ENCODE measurements at regions of chr3 and their contacts with region 1.

Region 1: DNA sequence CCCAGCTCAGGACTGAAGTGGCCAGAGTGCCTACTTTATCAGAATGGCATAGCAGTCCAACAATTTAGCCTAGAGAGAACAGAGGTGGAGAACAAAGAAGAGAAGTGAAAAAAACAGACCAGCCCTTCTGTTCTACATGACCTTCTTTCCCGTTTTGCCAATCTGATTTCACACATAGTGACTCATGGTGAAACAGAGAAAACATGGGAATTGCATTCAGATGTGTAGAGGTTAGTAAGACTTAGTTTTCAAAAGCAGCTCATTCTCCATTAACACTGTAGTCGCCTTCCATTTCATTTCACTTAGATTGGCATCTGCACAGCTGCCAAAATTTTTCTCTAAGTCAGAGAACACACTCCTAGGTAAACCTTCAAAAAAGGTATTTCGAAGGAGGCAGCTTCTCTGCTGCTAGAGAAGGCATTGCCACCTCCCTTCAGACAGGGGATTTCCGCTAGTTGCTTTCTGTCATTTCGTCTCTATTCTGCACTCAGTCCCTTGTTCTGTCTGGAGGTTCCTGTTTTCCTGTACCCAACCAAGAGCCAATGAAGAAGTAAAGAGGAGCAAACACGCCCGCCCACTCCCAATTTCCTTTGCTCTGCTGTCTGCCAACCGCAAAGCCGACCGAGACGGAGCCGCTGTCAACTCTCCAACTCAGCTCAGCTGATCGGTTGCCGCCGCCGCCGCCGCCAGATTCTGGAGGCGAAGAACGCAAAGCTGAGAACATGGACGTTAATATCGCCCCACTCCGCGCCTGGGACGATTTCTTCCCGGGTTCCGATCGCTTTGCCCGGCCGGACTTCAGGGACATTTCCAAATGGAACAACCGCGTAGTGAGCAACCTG is at the start of gene ARL6IP5:
- H3K4me3 Mint-ChIP-seq: peak within 1 kb of the TSS; percentile 94
- H3K27ac Mint-ChIP-seq: peak within 1 kb of the TSS; percentile 98
- H3K4me1 Mint-ChIP-seq: peaks cover 39% of the 10 kb centered on the region
- H3K27me3 Mint-ChIP-seq: no peaks in the 10 kb centered on the region

Region 2: GRCh38 chr3:69051756-69052471 is 32.6 kb before region 1 on chr3 and contains the start of gene TMF1:
- intact Hi-C with region 1: loop called (anchors 5 kb)
- H3K4me3 Mint-ChIP-seq: peak within 1 kb of the TSS; percentile 97
- H3K27ac Mint-ChIP-seq: peak within 1 kb of the TSS; percentile 98
- H3K4me1 Mint-ChIP-seq: peaks cover 39% of the 10 kb centered on the region
- H3K27me3 Mint-ChIP-seq: no peaks in the 10 kb centered on the region

Measured in dendritic cell treated with granulocyte-macrophage colony-stimulating factor and Interleukin-4, amounts not matched to agents 40 ng/mL and 50 ng/mL, for 4 days (primary cell).